ENCODE measurements at regions of chrX and their contacts with region 1.

Region 1: DNA sequence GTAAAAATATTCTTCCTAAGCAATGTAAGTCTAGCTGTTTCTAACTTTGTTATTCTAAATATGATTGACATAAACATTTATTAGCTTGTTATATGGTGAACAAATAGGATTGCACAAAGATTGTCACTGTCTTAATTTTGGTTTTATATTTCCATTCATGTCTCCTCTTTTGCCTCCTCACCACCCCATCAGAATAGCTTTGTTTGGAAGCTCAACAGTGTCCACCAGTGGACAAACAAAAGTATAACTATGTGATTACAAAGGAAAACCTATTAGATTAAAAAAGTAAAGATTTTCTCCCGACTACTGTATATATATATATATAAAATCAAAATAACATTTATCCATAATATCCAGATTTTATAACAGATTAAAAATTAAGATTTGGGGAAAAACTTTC is 468.2 kb downstream of the ZIC3 start:
- DNase-seq: peak; percentile 51
- ATAC-seq: peak; percentile 51
- H3K4me3 ChIP-seq: no peak overlapping the region
- H3K27ac ChIP-seq: no peak overlapping the region
- H3K4me1 ChIP-seq: peaks cover 10% of the 10 kb centered on the region; the same call in 1 of the 2 replicates
- H3K27me3 ChIP-seq: no peaks in the 10 kb centered on the region
- CTCF ChIP-seq: peak; percentile 52

Region 2: DNA sequence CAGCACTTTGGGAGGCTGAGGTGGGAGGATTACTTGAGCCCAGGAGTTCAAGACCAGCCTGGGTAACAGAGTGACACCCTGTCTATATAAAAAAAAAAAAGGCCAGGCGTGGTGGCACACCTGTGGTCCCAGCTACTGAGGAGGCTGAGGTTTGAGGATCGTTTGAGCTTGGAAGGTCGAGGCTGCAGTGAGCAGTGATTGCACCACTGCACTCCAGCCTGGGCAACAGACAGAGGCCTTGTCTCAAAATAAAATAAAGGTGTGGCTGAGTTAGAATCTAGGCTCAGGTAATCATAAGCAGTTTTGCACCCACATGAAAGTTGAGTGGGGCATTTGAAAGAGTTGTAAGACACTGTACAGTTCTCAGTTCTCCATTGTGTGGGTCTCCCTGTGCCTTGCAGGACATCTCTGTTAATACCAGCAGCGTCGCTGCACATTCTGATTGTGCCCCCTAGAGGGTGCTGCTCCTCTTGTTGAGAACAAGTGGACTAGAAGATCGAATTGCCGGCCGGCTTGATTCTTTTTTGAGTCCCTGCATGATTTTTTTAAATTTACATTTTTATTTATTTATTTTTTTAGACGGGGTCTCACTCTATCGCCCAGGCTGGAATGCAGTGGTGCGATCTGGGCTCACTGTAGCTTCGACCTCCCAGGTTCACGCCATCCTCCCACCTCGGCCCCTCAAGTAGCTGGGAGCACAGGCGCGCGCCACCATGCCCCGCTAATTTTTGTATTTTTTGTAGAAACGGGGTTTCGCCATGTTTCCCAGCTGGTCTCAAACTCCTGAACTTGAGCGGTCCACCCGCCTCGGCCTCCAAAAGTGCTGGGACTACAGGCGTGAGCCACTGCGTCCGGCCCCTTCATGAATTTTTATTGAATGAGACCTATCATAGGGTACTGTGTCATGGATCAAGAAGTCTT is 1080.0 kb before region 1 on chrX:
- CTCF ChIA-PET with region 1: no interaction called
- POLR2A ChIA-PET with region 1: no interaction called
- intact Hi-C with region 1: loop called (anchors 2 kb)
- DNase-seq: peak; percentile 88
- ATAC-seq: peak; percentile 94
- H3K4me3 ChIP-seq: no peak overlapping the region
- H3K27ac ChIP-seq: no peak overlapping the region
- H3K4me1 ChIP-seq: no peaks in the 10 kb centered on the region
- H3K27me3 ChIP-seq: no peaks in the 10 kb centered on the region
- CTCF ChIP-seq: peak; percentile 66

Region 3: GRCh38 chrX:137051978-137052642 is 982.0 kb before region 1 on chrX:
- CTCF ChIA-PET with region 1: no interaction called
- POLR2A ChIA-PET with region 1: no interaction called
- intact Hi-C with region 1: loop called (anchors 10 kb)
- DNase-seq: peak; percentile 68
- ATAC-seq: peak; percentile 96
- H3K4me3 ChIP-seq: peak overlapping the region; percentile 69
- H3K27ac ChIP-seq: no peak overlapping the region
- H3K4me1 ChIP-seq: 0 out of 2 replicates have a peak, but pooled peaks cover 3% of the 10 kb centered on the region
- H3K27me3 ChIP-seq: peaks cover 17% of the 10 kb centered on the region; the same call in 1 of the 2 replicates
- CTCF ChIP-seq: peak; percentile 85

Region 4: GRCh38 chrX:137194164-137194563 is 840.0 kb before region 1 on chrX:
- CTCF ChIA-PET with region 1: no interaction called
- POLR2A ChIA-PET with region 1: no interaction called
- intact Hi-C with region 1: loop called (anchors 5 kb)
- DNase-seq: peak; percentile 72
- ATAC-seq: peak; percentile 23; the same call in 1 of the 2 replicates
- H3K4me3 ChIP-seq: no peak overlapping the region
- H3K27ac ChIP-seq: no peak overlapping the region
- H3K4me1 ChIP-seq: peaks cover 38% of the 10 kb centered on the region
- H3K27me3 ChIP-seq: no peaks in the 10 kb centered on the region
- CTCF ChIP-seq: peak; percentile 73

Region 5: DNA sequence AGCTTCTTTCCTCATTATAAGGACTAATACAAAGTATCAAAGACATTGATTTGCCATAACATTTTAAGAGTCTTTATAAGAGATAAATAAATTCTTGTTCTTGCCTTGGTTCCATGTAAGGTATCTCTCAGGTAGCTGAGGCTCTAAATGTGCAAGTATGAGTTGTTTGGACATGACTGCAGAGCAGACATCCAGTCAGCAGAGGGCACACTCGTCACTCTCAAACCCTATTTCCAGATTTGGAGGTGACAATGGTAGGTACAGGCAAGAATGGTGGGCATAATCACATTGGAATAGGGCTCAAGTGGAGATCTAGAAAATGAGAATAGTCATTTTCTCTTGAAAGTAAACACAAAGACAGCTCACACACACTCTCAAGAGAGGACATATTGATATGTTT is 601.5 kb before region 1 on chrX:
- CTCF ChIA-PET with region 1: no interaction called
- POLR2A ChIA-PET with region 1: no interaction called
- intact Hi-C with region 1: loop called (anchors 1 kb)
- DNase-seq: peak; percentile 41
- ATAC-seq: no peak
- H3K4me3 ChIP-seq: no peak overlapping the region
- H3K27ac ChIP-seq: no peak overlapping the region
- H3K4me1 ChIP-seq: no peaks in the 10 kb centered on the region
- H3K27me3 ChIP-seq: peaks cover 4% of the 10 kb centered on the region
- CTCF ChIP-seq: peak; percentile 64

Region 6: DNA sequence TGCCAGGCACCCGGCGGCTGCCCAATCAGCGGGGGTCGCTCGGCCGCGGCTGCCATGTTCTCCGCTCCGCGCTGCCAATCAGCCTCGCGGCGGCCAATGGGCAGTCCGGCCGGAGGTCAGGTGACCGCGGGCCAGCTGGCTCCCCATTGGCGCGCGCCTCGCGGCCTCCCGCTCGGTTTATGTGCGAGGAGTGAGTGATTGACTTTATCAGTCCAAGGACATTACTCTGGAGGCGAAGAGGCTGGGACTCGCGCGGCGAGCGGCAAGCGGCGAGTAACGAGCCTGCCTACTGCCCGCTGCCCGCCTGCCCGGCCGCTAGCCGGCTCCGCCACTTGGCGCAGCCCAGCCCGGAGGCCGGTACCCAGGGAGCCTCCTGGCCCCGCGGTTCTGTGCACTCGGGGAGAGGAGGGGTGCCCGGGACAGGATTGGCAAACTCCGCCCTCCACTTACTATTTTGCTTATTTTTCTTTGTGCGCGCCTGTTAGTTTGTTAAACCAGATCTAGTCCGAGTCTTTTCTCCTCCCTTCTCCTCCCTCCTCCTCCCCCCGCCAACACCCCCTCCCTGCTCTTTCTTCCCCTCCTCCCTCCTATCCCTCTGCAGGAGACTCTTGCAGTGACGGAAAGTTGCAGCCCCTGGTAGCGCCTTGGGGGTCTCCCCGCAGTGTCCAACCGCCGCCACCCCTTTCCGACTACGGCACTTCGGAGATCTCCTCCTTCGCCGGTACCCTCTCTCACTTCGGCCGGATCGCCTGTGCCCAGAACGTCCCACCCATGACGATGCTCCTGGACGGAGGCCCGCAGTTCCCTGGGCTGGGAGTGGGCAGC is 468.0 kb before region 1 on chrX and contains the start of gene ZIC3:
- CTCF ChIA-PET with region 1: no interaction called
- POLR2A ChIA-PET with region 1: no interaction called
- intact Hi-C with region 1: loop called (anchors 10 kb)
- DNase-seq: peak; percentile 50
- ATAC-seq: peak; percentile 83
- H3K4me3 ChIP-seq: peak within 1 kb of the TSS; percentile 63
- H3K27ac ChIP-seq: no peak within 1 kb of the TSS
- H3K4me1 ChIP-seq: 0 out of 2 replicates have a peak, but pooled peaks cover 3% of the 10 kb centered on the region
- H3K27me3 ChIP-seq: peaks cover 66% of the 10 kb centered on the region
- CTCF ChIP-seq: no peak
- total RNA-seq, gene ZIC3: not detected in 2 replicates